ENCODE measurements at regions of chr11 and their contacts with region 1.

Region 1: GRCh38 chr11:133947321-133947756 is 9.4 kb downstream of the IGSF9B start:
- DNase-seq: peak; percentile 62
- H3K4me3 Mint-ChIP-seq: no peak overlapping the region
- H3K27ac Mint-ChIP-seq: no peak overlapping the region
- H3K4me1 Mint-ChIP-seq: peaks cover 53% of the 10 kb centered on the region
- H3K27me3 Mint-ChIP-seq: no peaks in the 10 kb centered on the region
- CTCF ChIP-seq: peak; percentile 28

Region 2: DNA sequence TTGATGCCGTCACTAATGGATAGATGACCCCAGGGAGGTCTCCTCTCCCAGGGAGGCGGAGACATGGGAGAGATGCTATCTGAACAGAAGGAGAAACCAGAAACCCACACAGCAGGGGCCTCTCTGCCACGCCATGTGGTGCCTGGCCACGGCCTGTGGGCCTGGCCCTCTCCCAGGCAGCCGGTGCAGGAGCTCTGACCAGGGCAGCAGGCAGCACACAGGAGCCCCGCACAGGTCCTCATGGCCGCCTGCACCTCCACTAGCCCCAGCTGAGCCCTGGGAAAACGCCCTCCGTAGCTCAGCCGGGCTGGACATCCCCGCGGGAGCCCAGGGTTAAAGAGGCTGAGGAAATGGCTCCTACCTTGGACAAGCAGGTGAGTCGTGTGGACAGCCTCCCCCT is 10.3 kb before region 1 on chr11:
- CTCF ChIA-PET with region 1: interaction called, 14 read pairs
- POLR2A ChIA-PET with region 1: interaction called, 9 read pairs
- intact Hi-C with region 1: no loop called
- DNase-seq: no peak
- H3K4me3 Mint-ChIP-seq: no peak overlapping the region
- H3K27ac Mint-ChIP-seq: no peak overlapping the region
- H3K4me1 Mint-ChIP-seq: peaks cover 12% of the 10 kb centered on the region
- H3K27me3 Mint-ChIP-seq: no peaks in the 10 kb centered on the region
- CTCF ChIP-seq: no peak

Region 3: GRCh38 chr11:134008634-134009071 is 61.3 kb after region 1 on chr11:
- CTCF ChIA-PET with region 1: no interaction called
- POLR2A ChIA-PET with region 1: no interaction called
- intact Hi-C with region 1: no loop called
- DNase-seq: no peak
- H3K4me3 Mint-ChIP-seq: no peak overlapping the region
- H3K27ac Mint-ChIP-seq: no peak overlapping the region
- H3K4me1 Mint-ChIP-seq: no peaks in the 10 kb centered on the region
- H3K27me3 Mint-ChIP-seq: no peaks in the 10 kb centered on the region
- CTCF ChIP-seq: no peak

Region 4: GRCh38 chr11:134024420-134025081 is 77.2 kb after region 1 on chr11:
- CTCF ChIA-PET with region 1: interaction called, 11 read pairs
- POLR2A ChIA-PET with region 1: interaction called, 3 read pairs
- intact Hi-C with region 1: no loop called
- DNase-seq: peak; percentile 89
- H3K4me3 Mint-ChIP-seq: peak overlapping the region; percentile 50
- H3K27ac Mint-ChIP-seq: peak overlapping the region; percentile 81
- H3K4me1 Mint-ChIP-seq: peaks cover 33% of the 10 kb centered on the region
- H3K27me3 Mint-ChIP-seq: no peaks in the 10 kb centered on the region
- CTCF ChIP-seq: no peak

Region 5: DNA sequence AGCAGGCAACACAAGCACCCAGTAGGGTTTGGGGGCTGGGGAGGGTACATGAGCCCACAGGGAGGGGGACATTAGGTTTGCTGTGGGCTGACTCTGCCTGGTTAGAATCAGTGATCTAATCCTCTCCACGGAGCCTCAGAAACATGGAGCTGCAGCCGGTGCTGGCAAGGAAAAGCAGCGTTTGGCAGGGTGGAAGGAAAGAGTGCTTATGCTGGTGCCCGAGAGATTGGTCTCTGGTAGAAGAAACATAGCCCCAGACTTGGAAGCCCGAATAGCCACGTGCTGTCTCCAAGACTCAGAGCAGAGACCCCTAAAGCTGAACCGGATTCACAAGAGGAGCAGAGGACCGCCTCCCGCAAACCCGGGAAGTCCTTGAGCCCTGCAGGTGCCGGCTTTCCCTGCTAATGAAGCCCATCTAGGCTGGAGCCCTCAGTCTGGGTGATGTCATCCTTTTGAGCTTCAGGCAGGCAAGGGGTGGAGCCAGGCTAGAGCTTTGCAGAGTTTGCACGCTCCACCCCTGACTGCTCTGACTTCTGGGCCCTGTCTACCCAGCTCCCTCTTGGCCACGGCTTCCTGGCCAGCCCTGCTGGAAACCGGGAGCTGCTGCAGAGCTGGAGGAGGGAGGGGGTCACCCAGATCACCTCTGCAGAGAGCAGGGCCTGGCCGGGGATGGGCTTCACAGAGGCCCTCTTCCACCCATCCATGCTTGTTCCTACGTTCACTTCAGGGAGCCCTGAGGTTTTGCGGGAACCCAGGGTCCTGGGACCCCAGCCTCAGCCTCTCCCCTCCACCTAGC is 86.6 kb after region 1 on chr11:
- CTCF ChIA-PET with region 1: interaction called, 92 read pairs
- POLR2A ChIA-PET with region 1: interaction called, 21 read pairs
- intact Hi-C with region 1: no loop called
- DNase-seq: peak; percentile 86
- H3K4me3 Mint-ChIP-seq: peak overlapping the region; percentile 58
- H3K27ac Mint-ChIP-seq: peak overlapping the region; percentile 76
- H3K4me1 Mint-ChIP-seq: peaks cover 36% of the 10 kb centered on the region
- H3K27me3 Mint-ChIP-seq: no peaks in the 10 kb centered on the region
- CTCF ChIP-seq: no peak